ENCODE measurements at regions of chr12 and their contacts with region 1.

Region 1: GRCh38 chr12:89524541-89525285 is at the start of gene GALNT4:
- DNase-seq: peak; percentile 89
- ATAC-seq: peak; percentile 73
- H3K4me3 Mint-ChIP-seq: peak within 1 kb of the TSS; percentile 92
- H3K27ac Mint-ChIP-seq: peak within 1 kb of the TSS; percentile 97
- H3K4me1 Mint-ChIP-seq: peaks cover 74% of the 10 kb centered on the region
- H3K27me3 Mint-ChIP-seq: no peaks in the 10 kb centered on the region
- total RNA-seq, gene GALNT4: 16.5 to 17.5 TPM

Region 2: DNA sequence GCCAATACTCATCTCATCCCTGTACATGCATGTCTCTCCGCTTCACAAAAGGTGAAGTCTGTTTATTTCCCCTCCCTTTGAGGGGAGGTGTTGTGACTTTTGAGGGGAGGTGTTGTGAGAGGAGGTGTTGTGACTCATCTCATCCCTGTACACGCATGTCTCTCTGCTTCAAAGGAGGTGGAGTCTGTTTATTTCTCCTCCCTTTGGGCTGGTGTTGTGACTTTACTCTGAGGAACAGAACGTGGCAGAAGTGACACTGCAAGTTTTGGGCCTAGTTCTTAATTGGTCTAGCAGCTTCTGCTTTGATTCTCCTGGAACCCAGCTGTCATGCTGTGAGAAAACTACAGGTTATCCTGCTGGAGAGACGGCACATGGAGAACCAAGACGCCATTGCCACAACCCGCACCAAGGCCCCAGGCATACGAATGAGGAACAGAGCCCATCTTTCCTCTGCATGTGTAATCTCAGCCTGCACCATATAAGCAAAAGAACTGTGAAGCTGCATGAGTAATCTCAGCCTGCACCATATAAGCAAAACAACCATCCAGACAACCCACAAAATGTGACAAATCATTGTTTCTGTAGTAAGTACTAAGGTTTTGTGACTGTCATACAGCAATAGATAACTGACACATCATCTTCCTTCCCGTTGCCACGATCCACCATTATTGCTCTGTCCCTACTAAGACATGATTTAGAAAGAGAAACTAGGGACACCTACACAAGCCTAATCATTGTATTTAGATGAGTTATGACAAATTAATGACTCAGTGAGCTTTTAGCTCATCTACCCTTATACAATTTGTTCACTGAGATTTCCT is 30.1 kb before region 1 on chr12:
- CTCF ChIA-PET with region 1: interaction called, 13 read pairs
- DNase-seq: peak; percentile 66
- ATAC-seq: peak; percentile 88
- H3K4me3 Mint-ChIP-seq: peak overlapping the region; percentile 7
- H3K27ac Mint-ChIP-seq: peak overlapping the region; percentile 88
- H3K4me1 Mint-ChIP-seq: peaks cover 20% of the 10 kb centered on the region
- H3K27me3 Mint-ChIP-seq: no peaks in the 10 kb centered on the region